ENCODE measurements at regions of chr9 and their contacts with region 1.

Region 1: DNA sequence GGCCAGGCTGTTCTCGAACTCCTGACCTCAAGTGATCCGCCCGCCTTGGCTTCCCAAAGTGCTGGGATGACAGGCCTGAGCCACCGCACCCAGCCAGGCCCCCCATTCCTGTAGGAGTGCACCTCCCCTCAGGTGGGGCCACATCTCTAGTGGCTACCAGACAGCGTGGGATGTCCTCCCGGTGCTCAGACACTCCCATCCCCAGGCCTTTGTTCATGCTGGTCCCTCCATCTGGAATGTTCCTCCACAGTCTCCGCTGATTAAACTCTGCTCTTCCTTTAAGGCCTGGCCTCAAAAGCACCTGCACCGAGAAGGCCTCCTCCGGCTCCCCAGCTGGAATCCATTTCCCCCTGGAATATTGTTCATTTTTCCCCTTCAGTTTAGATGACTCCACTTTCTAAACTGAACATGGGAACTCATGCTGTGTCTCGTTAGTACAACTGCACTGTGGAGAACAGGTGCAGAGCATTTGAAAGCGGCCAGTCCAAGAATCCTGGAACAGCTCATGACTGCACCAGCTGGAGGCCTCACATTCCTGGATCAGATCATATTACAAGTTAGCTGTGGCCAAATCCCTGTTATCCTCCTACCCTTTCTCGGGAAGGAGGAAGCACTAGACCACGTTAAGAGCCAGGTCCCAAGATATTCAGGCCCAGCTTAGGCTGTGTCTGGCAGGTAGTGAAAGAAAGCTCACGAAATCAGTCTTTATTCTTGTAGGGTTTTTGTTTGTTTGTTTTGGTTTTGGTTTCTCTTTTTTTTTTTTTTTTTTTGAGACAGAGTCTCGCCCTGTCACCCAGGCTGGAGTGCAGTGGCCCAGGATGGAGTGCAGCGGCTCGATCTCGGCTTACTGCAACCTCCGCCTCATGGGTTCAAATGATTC is 10.8 kb upstream of the PRRC2B start:
- DNase-seq: peak; percentile 63 to 78
- H3K4me3 ChIP-seq: no peak overlapping the region; the same call in 1 of the 2 replicates
- H3K27ac ChIP-seq: peak overlapping the region; percentile 34
- H3K4me1 ChIP-seq: peaks cover 33% of the 10 kb centered on the region
- H3K27me3 ChIP-seq: no peaks in the 10 kb centered on the region
- CTCF ChIP-seq: no peak

Region 2: GRCh38 chr9:130756037-130756436 is 627.1 kb before region 1 on chr9:
- CTCF ChIA-PET with region 1: no interaction called
- POLR2A ChIA-PET with region 1: no interaction called
- intact Hi-C with region 1: no loop called
- DNase-seq: no peak
- H3K4me3 ChIP-seq: no peak overlapping the region
- H3K27ac ChIP-seq: no peak overlapping the region
- H3K4me1 ChIP-seq: no peaks in the 10 kb centered on the region
- H3K27me3 ChIP-seq: no peaks in the 10 kb centered on the region
- CTCF ChIP-seq: no peak

Region 3: DNA sequence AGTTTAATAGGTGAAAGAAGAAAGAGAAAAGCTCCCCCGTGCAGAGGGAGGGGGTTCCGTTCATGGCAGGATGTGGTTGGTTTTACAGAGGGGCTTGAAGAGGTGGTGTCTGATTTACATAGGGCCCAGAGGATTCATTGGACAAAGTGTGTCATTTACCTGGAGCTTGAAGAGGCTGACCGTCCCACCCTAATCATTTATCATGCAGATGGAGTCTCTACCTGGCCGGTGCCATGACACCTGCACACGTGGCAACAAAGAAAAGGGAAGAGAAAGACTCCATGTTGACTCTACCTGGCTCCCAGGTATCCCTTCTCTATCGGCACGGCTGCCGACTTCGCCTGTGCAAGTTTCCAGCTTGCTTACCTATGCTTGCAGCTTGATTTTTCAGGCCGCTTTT is 24.5 kb before region 1 on chr9:
- CTCF ChIA-PET with region 1: no interaction called
- POLR2A ChIA-PET with region 1: no interaction called
- intact Hi-C with region 1: loop called (anchors 1 kb)
- DNase-seq: no peak
- H3K4me3 ChIP-seq: no peak overlapping the region
- H3K27ac ChIP-seq: no peak overlapping the region
- H3K4me1 ChIP-seq: peaks cover 23% of the 10 kb centered on the region
- H3K27me3 ChIP-seq: no peaks in the 10 kb centered on the region
- CTCF ChIP-seq: no peak

Region 4: GRCh38 chr9:131366761-131367401 is 16.2 kb before region 1 on chr9:
- CTCF ChIA-PET with region 1: interaction called, 15 read pairs
- POLR2A ChIA-PET with region 1: no interaction called
- intact Hi-C with region 1: no loop called
- DNase-seq: peak; percentile 64 to 72
- H3K4me3 ChIP-seq: no peak overlapping the region
- H3K27ac ChIP-seq: no peak overlapping the region
- H3K4me1 ChIP-seq: peaks cover 19% of the 10 kb centered on the region
- H3K27me3 ChIP-seq: no peaks in the 10 kb centered on the region
- CTCF ChIP-seq: no peak; the same call in 1 of the 2 replicates

Region 5: DNA sequence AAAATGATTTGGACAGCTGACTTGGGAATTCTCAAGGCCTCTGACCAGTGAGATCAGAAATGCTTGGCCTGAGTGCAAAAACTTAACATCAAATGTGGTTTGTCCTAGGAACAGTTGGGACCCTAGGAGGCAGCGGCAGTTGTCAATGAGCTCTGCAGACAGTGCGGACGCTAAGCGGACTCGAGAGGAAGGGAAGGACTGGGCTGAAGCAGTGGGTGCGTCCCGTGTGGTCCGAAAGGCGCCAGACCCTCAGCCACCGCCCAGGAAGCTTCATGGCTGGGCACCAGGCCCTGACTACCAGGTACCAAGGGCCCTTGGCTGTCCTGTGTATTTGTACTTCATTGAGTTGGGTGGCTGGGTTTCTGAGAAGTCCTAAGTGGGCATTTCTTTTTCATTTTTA is 76.0 kb after region 1 on chr9:
- CTCF ChIA-PET with region 1: interaction called, 10 read pairs
- POLR2A ChIA-PET with region 1: no interaction called
- intact Hi-C with region 1: no loop called
- DNase-seq: no peak
- H3K4me3 ChIP-seq: no peak overlapping the region
- H3K27ac ChIP-seq: no peak overlapping the region
- H3K4me1 ChIP-seq: no peaks in the 10 kb centered on the region
- H3K27me3 ChIP-seq: no peaks in the 10 kb centered on the region
- CTCF ChIP-seq: no peak

Region 6: DNA sequence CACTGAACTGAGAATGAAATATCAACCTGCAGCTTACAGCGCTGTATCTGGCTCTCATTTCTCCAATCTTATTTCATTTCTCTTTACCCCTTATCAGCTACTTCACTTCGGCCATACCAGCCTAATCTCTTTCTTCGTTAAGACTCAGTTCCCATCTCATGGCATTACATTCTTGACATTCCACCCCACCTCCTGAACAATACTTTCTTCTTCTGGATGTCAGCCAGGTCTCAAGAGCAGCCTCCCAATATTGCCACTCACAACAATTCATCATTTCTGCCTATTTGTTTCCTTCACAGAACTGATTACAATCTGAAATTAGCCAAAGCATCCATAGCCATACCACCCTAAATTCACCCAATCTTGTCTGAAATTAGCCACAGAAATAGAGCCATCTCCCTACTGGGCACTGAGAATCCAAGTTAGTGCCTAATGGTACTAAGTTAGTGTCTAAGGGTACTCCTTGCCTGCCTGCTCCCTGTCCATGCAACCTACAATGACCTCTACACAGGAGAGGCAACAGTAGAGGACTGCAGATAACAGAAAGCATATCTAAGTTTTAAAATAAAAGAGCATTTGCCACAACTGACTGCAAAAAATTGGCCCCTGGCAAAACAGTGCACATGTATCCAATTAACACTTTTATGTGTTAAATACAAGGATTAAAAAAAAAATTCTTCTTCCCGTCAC is 936.5 kb after region 1 on chr9:
- CTCF ChIA-PET with region 1: no interaction called
- POLR2A ChIA-PET with region 1: interaction called, 10 read pairs
- intact Hi-C with region 1: no loop called
- DNase-seq: peak in 1 of 2 experiments; percentile 14
- H3K4me3 ChIP-seq: no peak overlapping the region
- H3K27ac ChIP-seq: no peak overlapping the region
- H3K4me1 ChIP-seq: no peaks in the 10 kb centered on the region
- H3K27me3 ChIP-seq: no peaks in the 10 kb centered on the region
- CTCF ChIP-seq: no peak

Measured in PC-9 (cell line).